ENCODE measurements at regions of chr3 and their contacts with region 1.

Region 1: DNA sequence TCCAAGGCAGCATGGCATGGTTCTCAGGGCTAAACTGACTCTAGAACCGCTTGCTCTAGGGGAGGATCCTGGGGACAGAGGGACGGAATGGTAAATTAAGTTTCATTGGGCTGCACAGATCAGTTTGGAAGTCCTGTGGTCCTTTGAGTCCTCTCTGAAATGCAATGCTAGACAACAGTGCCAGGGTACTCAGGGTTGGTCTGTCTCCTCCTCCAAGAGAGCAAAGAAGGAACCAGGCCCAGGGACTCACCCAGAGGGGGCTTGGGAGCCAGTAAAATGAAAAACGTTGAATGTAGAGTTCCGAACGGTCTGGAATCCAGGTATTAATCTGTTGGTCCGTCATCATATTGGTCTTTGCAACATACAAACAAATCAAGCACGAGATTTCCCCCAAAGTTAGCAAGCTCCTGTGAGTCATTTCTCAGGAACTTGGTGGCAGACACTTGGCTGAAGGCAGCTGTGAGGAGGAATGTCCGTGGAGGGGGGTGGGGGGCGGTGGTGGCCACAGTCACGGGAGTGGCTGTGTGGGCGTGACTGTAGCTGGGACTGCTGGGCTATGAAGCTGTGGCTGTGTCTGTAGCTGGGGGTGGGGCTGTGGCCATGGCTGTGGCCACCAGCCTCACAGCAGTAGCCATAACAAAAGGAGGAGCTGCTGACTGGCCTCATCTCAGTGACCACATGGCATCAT is 361.0 kb downstream of the SHQ1 start:
- H3K4me3 Mint-ChIP-seq: peak overlapping the region; percentile 61
- H3K27ac Mint-ChIP-seq: peak overlapping the region; percentile 97
- H3K4me1 Mint-ChIP-seq: peaks cover 81% of the 10 kb centered on the region
- H3K27me3 Mint-ChIP-seq: no peaks in the 10 kb centered on the region

Region 2: GRCh38 chr3:72152551-72153476 is 334.4 kb before region 1 on chr3:
- intact Hi-C with region 1: no loop called
- H3K4me3 Mint-ChIP-seq: no peak overlapping the region
- H3K27ac Mint-ChIP-seq: no peak overlapping the region
- H3K4me1 Mint-ChIP-seq: peaks cover 6% of the 10 kb centered on the region
- H3K27me3 Mint-ChIP-seq: peaks cover 55% of the 10 kb centered on the region

Region 3: GRCh38 chr3:72447059-72447946 is 39.9 kb before region 1 on chr3:
- intact Hi-C with region 1: loop called (anchors 5 kb)
- H3K4me3 Mint-ChIP-seq: peak overlapping the region; percentile 83
- H3K27ac Mint-ChIP-seq: peak overlapping the region; percentile 74
- H3K4me1 Mint-ChIP-seq: peaks cover 53% of the 10 kb centered on the region
- H3K27me3 Mint-ChIP-seq: peaks cover 12% of the 10 kb centered on the region

Region 4: DNA sequence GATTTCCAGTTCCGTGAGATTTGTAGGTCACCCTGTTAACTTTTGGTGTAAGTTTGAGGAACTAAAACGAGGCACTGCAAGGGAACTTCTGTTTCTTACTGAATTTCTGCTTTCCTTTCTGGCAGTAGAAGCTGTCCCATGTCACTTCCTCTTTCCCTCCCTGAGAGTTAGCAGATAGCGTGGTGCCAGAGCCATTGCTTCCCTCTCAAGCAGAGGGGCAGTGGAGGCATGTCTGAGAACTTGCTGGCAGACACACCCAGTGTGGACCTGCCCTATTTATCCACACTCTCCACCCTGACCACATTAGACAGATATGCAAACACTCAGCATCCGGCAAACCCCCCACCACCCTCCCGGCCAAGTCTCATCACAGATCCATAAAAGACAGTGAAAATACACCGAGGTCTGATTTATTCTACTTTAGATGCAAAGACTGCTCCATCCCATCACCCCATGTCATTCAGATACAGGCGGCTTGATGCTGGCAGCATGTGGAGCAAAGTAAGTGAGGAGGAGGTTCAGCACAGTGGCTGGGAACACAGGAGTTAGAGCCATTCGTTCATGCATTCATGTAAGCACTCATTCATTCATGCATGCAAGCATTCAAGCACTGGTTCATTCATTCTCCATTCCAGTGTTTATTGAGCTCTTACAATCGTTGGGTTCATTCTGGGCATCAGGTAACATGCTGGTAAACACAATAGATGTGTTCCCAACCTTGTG is 36.4 kb after region 1 on chr3:
- intact Hi-C with region 1: loop called (anchors 5 kb)
- H3K4me3 Mint-ChIP-seq: peak overlapping the region; percentile 27
- H3K27ac Mint-ChIP-seq: peak overlapping the region; percentile 92
- H3K4me1 Mint-ChIP-seq: peaks cover 44% of the 10 kb centered on the region
- H3K27me3 Mint-ChIP-seq: no peaks in the 10 kb centered on the region